SK-N-SH (cell line): ENCODE measurements at regions of chr17 and their contacts with region 1.

Region 1: GRCh38 chr17:40038882-40039513 is 15.2 kb downstream of the MED24 start:
- DNase-seq: peak; percentile 80
- H3K4me3 ChIP-seq: no peak overlapping the region
- H3K27ac ChIP-seq: peak overlapping the region; percentile 34 to 64
- H3K4me1 ChIP-seq: peaks cover 0 to 6% of the 10 kb centered on the region in 2 experiments; a peak in 1 of 4 replicates
- H3K27me3 ChIP-seq: no peaks in the 10 kb centered on the region
- CTCF ChIP-seq: peak; percentile 83
- EP300 ChIP-seq: no peak
- RAD21 ChIP-seq: peak; percentile 64

Region 2: DNA sequence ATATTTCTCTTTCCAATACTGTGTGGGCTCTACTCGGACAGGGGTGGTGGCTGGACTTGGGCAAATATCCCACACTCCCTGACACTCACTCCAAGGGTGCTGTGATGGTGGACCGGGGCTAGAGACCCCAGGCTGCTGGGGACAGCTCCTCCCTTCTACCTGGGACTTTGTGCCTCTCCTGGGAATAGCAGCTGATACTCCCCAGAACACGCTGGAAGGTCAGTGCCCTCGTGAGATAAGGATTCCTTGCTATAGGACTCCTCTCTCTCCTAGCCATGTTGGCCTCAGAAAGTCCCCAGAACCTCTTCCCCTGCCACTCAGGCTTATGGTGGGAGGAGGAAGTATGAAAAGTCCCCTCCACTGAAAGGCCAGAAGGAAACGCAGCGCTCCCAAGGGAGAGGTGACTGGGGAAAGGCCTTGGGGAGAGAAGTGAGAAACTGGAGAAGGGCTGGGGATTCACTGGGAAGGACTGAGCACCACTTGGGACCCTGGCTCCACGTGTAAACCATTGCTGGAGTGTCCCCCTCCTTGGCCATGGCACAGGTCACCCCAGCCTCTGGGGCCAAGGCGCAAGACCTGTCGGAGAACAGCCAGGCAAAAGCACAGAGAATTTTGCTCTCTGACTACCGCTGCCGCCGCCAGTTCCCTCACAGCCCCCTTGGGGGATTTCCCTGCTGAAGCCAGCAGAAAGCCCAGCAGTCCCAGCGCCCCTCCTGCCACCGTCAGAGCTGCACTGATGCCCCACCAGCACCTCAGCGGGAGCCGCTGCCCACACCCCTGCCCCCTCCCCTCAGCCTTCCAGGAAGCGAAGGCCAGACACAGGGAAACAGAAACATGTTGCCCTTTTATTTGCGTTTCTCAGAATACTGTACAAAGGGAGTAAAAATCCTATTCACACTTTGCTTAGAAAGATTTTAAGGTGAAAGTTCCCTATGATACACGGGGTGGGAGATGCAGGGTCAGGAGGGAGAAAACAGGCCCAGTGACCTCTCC is 118.5 kb before region 1 on chr17:
- CTCF ChIA-PET with region 1: no interaction called
- POLR2A ChIA-PET with region 1: no interaction called
- DNase-seq: no peak
- H3K4me3 ChIP-seq: no peak overlapping the region
- H3K27ac ChIP-seq: no peak overlapping the region
- H3K4me1 ChIP-seq: peaks cover 0 to 9% of the 10 kb centered on the region in 2 experiments; a peak in 1 of 4 replicates
- H3K27me3 ChIP-seq: no peaks in the 10 kb centered on the region
- CTCF ChIP-seq: no peak
- EP300 ChIP-seq: no peak
- RAD21 ChIP-seq: no peak

Region 3: DNA sequence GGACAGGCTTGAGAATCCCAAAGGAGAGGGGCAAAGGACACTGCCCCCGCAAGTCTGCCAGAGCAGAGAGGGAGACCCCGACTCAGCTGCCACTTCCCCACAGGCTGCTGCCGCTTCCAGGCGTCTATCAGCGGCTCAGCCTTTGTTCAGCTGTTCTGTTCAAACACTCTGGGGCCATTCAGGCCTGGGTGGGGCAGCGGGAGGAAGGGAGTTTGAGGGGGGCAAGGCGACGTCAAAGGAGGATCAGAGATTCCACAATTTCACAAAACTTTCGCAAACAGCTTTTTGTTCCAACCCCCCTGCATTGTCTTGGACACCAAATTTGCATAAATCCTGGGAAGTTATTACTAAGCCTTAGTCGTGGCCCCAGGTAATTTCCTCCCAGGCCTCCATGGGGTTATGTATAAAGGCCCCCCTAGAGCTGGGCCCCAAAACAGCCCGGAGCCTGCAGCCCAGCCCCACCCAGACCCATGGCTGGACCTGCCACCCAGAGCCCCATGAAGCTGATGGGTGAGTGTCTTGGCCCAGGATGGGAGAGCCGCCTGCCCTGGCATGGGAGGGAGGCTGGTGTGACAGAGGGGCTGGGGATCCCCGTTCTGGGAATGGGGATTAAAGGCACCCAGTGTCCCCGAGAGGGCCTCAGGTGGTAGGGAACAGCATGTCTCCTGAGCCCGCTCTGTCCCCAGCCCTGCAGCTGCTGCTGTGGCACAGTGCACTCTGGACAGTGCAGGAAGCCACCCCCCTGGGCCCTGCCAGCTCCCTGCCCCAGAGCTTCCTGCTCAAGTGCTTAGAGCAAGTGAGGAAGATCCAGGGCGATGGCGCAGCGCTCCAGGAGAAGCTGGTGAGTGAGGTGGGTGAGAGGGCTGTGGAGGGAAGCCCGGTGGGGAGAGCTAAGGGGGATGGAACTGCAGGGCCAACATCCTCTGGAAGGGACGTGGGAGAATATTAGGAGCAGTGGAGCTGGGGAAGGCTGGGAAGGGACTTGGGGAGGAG is 23.7 kb before region 1 on chr17 and contains the start of gene CSF3:
- CTCF ChIA-PET with region 1: interaction called, 35 read pairs
- POLR2A ChIA-PET with region 1: no interaction called
- DNase-seq: peak; percentile 19
- H3K4me3 ChIP-seq: no peak within 1 kb of the TSS
- H3K27ac ChIP-seq: no peak within 1 kb of the TSS
- H3K4me1 ChIP-seq: no peaks in the 10 kb centered on the region; a peak in 1 of 4 replicates
- H3K27me3 ChIP-seq: no peaks in the 10 kb centered on the region
- CTCF ChIP-seq: no peak
- EP300 ChIP-seq: no peak
- RAD21 ChIP-seq: no peak
- polyA plus RNA-seq, gene CSF3: not detected in 2 replicates

Region 4: DNA sequence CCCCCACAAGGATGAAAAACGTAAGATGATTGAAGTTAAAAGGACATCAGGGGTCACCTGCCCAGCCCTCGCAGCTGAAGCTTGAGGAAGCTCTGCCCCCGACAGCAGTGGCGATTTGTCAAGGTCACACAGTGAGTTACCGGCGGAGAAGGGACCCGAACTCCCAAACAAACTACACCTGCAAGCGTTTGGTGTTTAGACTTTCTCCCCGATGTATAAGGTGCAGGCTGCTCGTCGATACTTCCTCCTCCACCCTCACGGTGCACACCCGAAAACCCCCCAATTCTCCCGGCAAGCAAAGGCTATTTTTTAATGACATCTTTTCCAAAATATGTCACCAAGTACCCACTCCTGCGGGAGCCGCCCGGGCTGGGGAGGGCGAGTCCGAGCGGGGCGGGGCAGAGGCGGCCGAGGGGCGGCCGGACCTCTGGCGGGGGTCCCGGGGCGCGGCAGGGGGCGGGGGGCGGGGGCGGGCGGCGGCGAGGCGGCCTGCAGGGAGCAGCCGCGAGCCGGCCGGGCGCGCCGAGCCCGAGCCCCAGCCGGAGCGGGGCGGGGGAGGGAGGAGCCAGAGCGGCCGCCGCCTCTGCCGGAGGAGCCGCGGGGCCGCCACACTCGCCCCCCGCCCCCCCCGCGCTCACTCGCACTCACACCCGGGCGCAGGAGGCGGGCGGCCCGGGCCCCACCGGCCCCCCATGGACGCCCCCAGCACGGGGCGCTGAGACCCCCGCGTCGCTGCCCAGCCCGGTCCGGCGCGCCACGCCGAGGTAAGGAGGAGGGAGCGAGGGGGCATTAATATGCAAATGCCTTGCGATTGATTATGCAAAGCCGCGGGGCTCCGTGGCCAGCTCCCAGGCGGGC is 23.6 kb after region 1 on chr17 and contains the start of gene THRA:
- CTCF ChIA-PET with region 1: interaction called, 10 read pairs
- POLR2A ChIA-PET with region 1: interaction called, 5 read pairs
- DNase-seq: peak; percentile 95
- H3K4me3 ChIP-seq: peak within 1 kb of the TSS; percentile 77 to 94
- H3K27ac ChIP-seq: peak within 1 kb of the TSS in 1 of 2 experiments; percentile 81; a peak in 2 of 4 replicates
- H3K4me1 ChIP-seq: peaks cover 13 to 32% of the 10 kb centered on the region in 2 experiments; a peak in 3 of 4 replicates
- H3K27me3 ChIP-seq: no peaks in the 10 kb centered on the region
- CTCF ChIP-seq: no peak
- EP300 ChIP-seq: no peak
- RAD21 ChIP-seq: peak; percentile 38; the same call in 1 of the 2 replicates
- polyA plus RNA-seq, gene THRA: 20.1 and 23.1 TPM in 2 replicates